ENCODE measurements at regions of chr6 and their contacts with region 1.

Region 1: GRCh38 chr6:73560182-73560732 is 39.4 kb upstream of the EEF1A1 start:
- DNase-seq: no peak
- H3K4me3 ChIP-seq: no peak overlapping the region
- H3K27ac ChIP-seq: no peak overlapping the region
- H3K4me1 ChIP-seq: 0 out of 2 replicates have a peak, but pooled peaks cover under 1% of the 10 kb centered on the region
- H3K27me3 ChIP-seq: no peaks in the 10 kb centered on the region
- CTCF ChIP-seq: no peak

Region 2: DNA sequence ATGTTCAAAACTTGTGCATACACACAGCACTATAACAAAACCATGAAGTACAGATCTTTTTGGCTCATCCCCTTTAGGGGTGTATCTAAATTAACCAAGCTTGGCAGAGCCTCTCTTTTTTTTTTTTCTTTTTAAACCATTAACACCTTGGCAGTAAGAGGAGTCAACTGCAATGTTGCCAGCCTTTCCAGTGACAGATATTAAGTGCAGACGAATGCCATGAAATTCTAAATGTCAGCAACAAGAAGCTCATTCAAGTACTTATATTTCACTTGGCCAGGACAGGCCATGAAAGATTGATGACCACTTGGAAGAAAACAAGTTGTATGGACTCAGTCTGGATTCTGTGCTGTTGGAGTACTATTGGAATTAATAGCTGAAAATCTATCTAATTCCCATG is 43.8 kb after region 1 on chr6:
- CTCF ChIA-PET with region 1: interaction called, 3 read pairs
- POLR2A ChIA-PET with region 1: interaction called, 15 read pairs
- intact Hi-C with region 1: no loop called
- DNase-seq: no peak
- H3K4me3 ChIP-seq: no peak overlapping the region
- H3K27ac ChIP-seq: no peak overlapping the region
- H3K4me1 ChIP-seq: no peaks in the 10 kb centered on the region
- H3K27me3 ChIP-seq: no peaks in the 10 kb centered on the region
- CTCF ChIP-seq: no peak

Measured in PC-9 (cell line).